ENCODE measurements at regions of chr2 and their contacts with region 1.

Region 1: GRCh38 chr2:130332271-130333073 is 10.2 kb upstream of the IMP4 start:
- DNase-seq: no peak
- H3K4me3 ChIP-seq: no peak overlapping the region
- H3K27ac ChIP-seq: no peak overlapping the region
- H3K27me3 ChIP-seq: peaks cover 10% of the 10 kb centered on the region
- CTCF ChIP-seq: peak; percentile 99

Region 2: GRCh38 chr2:129661935-129662334 is 670.5 kb before region 1 on chr2:
- CTCF ChIA-PET with region 1: no interaction called
- POLR2A ChIA-PET with region 1: no interaction called
- DNase-seq: no peak
- H3K4me3 ChIP-seq: no peak overlapping the region
- H3K27ac ChIP-seq: no peak overlapping the region
- H3K27me3 ChIP-seq: no peaks in the 10 kb centered on the region
- CTCF ChIP-seq: no peak

Region 3: DNA sequence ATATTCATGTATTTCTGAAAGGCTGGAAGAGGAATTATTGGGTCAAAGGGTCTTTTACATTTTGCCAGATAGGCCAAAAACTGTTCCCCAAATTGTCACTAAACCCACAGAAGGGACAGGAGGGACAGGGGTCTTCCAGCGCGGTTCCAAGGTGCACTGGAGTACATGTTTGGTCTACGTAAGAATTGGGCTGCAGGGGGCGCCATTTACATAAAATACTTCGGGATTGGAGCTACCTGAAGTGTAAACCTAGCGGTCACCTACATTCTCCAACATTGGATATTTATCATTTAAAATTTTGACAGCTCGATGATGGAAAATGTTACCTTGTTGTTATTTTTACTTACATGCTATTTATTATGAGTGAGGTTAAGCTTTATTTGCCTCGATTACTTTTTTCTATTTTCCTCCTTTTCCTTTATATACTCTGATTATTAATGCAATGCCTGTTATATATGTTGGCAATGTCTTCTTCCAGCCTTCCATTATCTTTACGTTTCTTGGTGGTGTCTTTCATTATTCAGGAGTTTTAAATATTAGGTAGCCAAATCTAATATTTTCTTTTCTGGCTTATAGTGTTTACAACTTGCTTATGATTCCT is 396.0 kb before region 1 on chr2:
- CTCF ChIA-PET with region 1: interaction called, 24 read pairs
- POLR2A ChIA-PET with region 1: no interaction called
- DNase-seq: no peak
- H3K4me3 ChIP-seq: no peak overlapping the region
- H3K27ac ChIP-seq: no peak overlapping the region
- H3K27me3 ChIP-seq: no peaks in the 10 kb centered on the region
- CTCF ChIP-seq: peak; percentile 47

Region 4: DNA sequence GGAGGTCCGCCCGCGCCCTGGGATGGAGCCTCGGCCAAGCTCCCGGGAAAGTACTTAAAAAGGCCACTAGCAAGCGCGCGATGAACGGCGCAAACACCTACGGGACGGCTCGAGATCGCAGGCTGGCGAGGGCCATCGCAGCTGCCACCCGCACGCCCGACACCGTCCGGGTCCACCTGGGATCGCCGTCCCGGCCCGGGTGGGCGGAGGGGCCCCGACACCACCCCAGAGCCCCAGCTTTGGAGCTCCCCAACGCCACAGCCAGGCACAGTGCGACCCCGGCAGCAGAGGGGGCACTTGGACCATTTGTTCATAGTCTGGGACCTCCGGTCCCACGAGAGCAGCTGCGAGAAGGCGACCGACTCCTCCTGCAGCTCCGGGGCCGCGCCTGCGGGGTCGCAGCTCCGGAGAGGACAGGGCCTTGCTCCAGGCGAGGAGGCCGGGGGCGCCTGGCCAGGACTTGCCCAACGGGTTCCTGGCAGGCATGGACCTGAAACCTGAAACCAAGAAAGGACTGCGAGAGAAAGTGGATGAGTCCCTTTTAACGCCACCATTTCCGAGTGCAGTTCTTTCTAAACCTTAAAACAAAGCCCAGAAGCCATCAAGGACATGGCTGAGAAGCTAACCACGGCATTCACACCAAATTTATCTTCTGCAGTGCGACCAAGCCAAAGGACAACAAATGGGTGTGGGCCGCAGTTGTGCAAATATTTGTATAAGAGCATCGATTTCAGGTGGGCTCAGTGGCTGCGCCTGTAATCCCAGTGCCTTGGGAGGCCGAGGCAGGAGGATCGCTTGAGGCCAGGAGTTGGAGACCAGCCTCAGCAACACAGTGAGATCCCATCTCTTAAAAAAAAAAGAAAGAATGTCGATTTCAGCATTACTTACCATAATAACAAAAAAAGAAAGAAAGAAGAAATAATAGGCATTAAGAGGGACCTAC is 43.7 kb before region 1 on chr2:
- CTCF ChIA-PET with region 1: no interaction called
- POLR2A ChIA-PET with region 1: no interaction called
- DNase-seq: no peak
- H3K4me3 ChIP-seq: no peak overlapping the region
- H3K27ac ChIP-seq: no peak overlapping the region
- H3K27me3 ChIP-seq: no peaks in the 10 kb centered on the region
- CTCF ChIP-seq: no peak

Region 5: DNA sequence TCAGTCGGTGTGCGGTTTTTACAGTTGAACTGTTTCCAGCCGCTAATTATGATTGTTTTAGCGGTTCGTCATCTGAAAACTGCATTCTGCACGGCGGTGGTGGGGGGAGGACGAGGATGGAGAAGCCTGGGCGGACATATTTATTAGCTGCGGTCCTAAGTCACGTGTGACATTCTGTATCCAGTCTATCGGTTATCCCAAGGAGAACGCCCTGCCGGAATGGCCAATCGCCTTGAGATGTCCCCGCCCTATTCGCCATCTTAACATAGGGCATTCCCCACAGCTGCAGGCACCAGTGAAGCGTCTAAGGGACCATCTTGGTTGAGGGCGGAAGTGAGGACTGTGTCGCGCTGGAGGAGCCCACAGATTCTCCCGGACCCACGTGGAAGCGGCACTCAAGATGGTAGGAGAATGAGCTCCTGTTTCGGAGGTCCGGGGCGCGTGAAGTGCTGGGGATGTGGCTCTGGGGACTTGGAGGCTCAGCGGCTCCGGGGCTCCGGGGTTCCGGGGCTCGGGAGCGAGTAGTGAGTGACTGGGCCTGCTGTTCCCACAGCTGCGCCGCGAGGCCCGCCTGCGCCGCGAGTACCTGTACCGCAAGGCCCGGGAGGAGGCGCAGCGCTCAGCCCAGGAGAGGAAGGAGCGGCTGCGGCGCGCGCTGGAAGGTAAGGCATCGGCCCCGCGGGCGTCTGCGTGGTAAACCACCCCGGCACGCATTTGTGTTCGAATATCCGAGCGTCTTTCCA is 10.2 kb after region 1 on chr2 and contains the start of gene IMP4:
- CTCF ChIA-PET with region 1: interaction called, 20 read pairs
- POLR2A ChIA-PET with region 1: interaction called, 6 read pairs
- DNase-seq: peak; percentile 98
- H3K4me3 ChIP-seq: peak within 1 kb of the TSS; percentile 95
- H3K27ac ChIP-seq: peak within 1 kb of the TSS; percentile 94
- H3K27me3 ChIP-seq: no peaks in the 10 kb centered on the region
- CTCF ChIP-seq: peak; percentile 42
- polyA plus RNA-seq, gene IMP4: 51.0 and 79.5 TPM in 2 replicates

Measured in AG04450 (cell line).